ENCODE measurements at regions of chr15 and their contacts with region 1.

Region 1: DNA sequence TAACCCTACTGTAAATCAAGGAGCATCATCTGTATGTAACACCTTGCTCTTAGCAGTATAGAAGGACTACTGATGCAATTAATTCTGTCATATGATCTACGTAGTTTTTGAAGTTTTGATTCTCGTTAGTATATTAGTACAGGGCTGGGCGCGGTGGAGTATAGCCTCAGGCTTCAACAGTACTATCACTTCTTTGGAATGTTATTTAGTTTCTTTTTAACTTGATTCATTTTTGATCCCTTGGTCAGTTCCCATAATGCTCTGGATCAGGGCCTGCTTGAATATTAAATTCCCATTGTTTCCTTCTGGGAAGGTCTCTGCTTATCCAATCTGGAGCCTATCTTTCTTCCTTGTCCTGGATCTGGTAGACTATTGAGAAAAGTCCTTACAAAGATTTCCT is 23.9 kb upstream of the AP4E1 start:
- DNase-seq: no peak
- H3K4me3 ChIP-seq: no peak overlapping the region
- H3K27ac ChIP-seq: peak overlapping the region; percentile 95
- H3K27me3 ChIP-seq: no peaks in the 10 kb centered on the region
- CTCF ChIP-seq: no peak

Region 2: GRCh38 chr15:50675536-50676144 is 208.9 kb before region 1 on chr15:
- CTCF ChIA-PET with region 1: interaction called, 66 read pairs
- POLR2A ChIA-PET with region 1: no interaction called
- DNase-seq: no peak
- H3K4me3 ChIP-seq: no peak overlapping the region
- H3K27ac ChIP-seq: no peak overlapping the region
- H3K27me3 ChIP-seq: no peaks in the 10 kb centered on the region
- CTCF ChIP-seq: peak; percentile 62

Region 3: GRCh38 chr15:50777045-50777444 is 107.5 kb before region 1 on chr15:
- CTCF ChIA-PET with region 1: interaction called, 16 read pairs
- POLR2A ChIA-PET with region 1: no interaction called
- DNase-seq: no peak
- H3K4me3 ChIP-seq: no peak overlapping the region
- H3K27ac ChIP-seq: no peak overlapping the region
- H3K27me3 ChIP-seq: peaks cover 4% of the 10 kb centered on the region
- CTCF ChIP-seq: 0 out of 2 replicates have a peak, but pooled peaks have one; percentile 6

Region 4: DNA sequence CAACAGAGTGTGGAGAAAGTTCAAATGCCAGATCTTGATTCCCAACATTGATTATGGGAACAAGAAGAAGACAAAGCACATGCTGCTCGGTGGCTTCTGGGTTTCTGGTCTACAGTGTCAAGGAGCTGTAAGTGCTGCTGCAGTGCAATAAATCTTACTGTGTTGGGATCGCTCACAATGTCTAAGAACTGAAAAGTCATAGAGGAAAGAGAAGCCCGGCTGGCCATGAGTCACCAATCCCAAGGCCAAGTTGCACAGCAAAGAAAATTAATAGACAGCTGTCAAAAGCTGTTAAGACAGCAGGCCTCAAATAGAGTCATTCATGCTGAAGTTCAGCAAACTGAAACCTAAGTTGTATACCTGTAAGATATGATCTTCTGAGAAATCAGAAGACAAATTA is 85.9 kb before region 1 on chr15:
- CTCF ChIA-PET with region 1: no interaction called
- POLR2A ChIA-PET with region 1: no interaction called
- DNase-seq: no peak
- H3K4me3 ChIP-seq: no peak overlapping the region
- H3K27ac ChIP-seq: no peak overlapping the region
- H3K27me3 ChIP-seq: peaks cover 7% of the 10 kb centered on the region
- CTCF ChIP-seq: no peak

Measured in AG04450 (cell line).